Aorta (tissue), 5 donors: ENCODE measurements at regions of chr18 and their contacts with region 1.

Region 1: DNA sequence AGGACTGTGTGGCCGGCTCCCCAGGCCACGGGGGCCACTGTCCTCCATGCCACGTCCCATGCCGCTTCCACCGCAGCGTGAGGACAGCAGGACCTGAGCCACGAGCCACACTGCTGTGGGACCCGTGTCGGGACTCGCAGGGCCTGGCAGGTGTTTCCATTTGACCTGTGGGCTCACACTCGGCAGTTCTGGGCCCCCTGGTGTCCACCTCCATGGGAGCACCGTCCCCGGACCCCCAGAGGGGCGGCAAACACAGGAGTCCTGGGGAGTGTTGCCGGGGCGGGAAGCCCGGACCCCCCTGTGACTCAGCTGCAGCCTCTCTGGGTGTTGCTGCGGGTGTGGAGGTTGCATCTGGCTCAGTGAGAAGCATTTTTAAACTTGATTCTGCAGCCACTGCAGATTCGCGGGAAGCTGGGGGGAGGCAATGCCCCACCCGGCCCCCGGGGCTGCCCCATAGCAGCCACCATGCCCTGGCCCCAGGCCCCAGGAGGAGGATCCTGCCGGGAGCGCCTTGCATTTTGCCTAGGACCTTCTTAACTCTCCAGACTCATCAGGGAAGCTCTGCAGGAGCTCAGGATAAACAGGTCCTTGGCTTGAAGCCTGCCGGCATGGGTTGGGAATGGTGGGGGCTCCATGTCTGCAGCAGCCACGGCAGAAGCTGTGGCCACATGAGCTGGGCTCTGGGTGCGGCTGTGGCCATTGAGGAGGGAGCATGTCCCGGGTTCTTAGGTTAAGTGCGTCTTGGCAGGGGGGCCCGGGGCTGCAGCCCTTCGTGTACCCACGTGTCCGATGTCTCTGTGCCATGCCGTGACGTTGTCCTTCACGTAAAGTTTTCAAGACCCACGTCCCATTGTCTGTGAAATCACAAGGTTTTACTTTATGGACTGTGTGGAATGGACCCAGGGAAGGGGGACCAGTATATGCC is 30.9 kb downstream of the NFATC1 start:
- DNase-seq: no peak
- ATAC-seq: no peak
- H3K4me3 ChIP-seq: no peak overlapping the region
- H3K27ac ChIP-seq: no peak overlapping the region
- H3K4me1 ChIP-seq: no peaks in the 10 kb centered on the region
- H3K27me3 ChIP-seq: no peaks in the 10 kb centered on the region

Region 2: DNA sequence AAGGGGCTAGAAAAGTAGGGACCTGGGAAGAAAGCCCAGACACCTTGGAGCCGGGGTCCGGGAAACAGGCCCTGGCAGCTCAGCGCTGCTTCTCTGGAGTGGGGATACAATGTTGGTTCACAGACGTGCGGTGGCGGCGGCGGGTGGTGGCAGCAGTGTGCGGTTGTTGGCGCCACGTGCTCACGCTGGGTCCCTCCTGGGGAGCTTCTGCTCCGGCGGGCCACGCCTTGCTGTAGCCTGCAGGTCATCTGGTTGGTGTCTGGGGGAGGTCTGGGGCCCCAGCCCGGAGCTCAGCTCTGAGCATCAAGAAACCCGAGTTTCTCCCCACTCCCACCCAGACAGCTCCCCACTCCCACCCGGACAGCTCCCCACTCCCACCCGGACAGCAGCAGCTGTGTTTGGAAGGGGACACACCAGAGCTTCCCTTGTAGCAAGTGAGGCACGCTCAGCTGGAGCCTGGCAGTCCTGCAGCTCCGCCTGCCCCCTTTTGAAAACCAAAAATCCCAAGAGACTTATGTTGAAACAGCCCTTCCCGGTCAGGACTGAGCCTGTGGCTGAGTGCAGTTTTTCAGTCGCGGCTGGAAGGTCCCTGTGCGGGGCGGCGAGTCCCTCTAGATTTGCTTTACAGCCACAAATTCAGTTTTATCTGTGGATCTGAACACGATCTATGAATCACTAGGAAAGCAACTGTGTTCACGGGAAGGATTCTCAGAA is 16.0 kb after region 1 on chr18:
- intact Hi-C with region 1: loop called in 1 of 2 experiments (anchors 1 kb)
- DNase-seq: no peak
- ATAC-seq: peak; percentile 40
- H3K4me3 ChIP-seq: no peak overlapping the region
- H3K27ac ChIP-seq: no peak overlapping the region
- H3K4me1 ChIP-seq: no peaks in the 10 kb centered on the region
- H3K27me3 ChIP-seq: no peaks in the 10 kb centered on the region